Calu3 (cell line): ENCODE measurements at regions of chr3 and their contacts with region 1.

Region 1: GRCh38 chr3:142374687-142375086 is 73.2 kb downstream of the XRN1 start:
- DNase-seq: no peak
- H3K4me3 Mint-ChIP-seq: no peak overlapping the region
- H3K27ac Mint-ChIP-seq: peak overlapping the region; percentile 18
- H3K4me1 Mint-ChIP-seq: no peaks in the 10 kb centered on the region
- H3K27me3 Mint-ChIP-seq: no peaks in the 10 kb centered on the region
- CTCF ChIP-seq: no peak

Region 2: DNA sequence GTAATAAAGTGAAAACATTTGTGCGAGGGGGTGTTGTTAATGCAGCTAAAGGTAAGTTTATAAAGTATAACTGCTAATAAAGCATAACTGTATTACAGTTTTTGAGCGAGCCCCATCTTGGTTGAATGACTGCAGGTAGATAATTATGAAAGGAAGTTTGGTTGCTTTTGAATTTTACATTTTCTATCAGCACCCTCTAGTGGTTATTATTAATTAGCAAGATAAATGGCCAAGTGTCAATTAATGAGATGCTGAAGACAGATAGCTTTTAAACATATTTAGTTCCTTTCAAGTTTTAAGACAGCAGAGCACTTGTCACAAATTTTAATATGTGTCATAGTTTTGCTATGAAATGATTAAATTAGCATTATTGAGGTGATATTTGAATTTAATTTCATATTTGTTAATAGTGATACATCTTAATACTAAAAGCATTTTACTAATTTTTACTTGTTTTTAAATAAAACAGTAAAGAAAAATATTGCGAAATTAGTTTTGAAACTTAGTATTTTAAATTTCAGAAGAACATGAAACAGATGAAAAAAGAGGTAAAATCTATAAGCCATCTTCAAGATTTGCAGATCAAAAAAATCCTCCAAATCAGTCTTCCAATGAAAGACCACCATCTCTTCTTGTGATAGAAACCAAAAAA is 641.8 kb after region 1 on chr3:
- CTCF ChIA-PET with region 1: no interaction called
- intact Hi-C with region 1: loop called (anchors 10 kb)
- DNase-seq: no peak
- H3K4me3 Mint-ChIP-seq: no peak overlapping the region
- H3K27ac Mint-ChIP-seq: no peak overlapping the region
- H3K4me1 Mint-ChIP-seq: no peaks in the 10 kb centered on the region
- H3K27me3 Mint-ChIP-seq: no peaks in the 10 kb centered on the region
- CTCF ChIP-seq: peak; percentile 35